Activated CD4-positive, alpha-beta memory T cell treated with anti-CD3 and anti-CD28 coated beads, Interleukin-2, amount 10 ng/mL, durations not matched to agents 7 days and 5 days (primary cell): ENCODE measurements at regions of chr7 and their contacts with region 1.

Region 1: DNA sequence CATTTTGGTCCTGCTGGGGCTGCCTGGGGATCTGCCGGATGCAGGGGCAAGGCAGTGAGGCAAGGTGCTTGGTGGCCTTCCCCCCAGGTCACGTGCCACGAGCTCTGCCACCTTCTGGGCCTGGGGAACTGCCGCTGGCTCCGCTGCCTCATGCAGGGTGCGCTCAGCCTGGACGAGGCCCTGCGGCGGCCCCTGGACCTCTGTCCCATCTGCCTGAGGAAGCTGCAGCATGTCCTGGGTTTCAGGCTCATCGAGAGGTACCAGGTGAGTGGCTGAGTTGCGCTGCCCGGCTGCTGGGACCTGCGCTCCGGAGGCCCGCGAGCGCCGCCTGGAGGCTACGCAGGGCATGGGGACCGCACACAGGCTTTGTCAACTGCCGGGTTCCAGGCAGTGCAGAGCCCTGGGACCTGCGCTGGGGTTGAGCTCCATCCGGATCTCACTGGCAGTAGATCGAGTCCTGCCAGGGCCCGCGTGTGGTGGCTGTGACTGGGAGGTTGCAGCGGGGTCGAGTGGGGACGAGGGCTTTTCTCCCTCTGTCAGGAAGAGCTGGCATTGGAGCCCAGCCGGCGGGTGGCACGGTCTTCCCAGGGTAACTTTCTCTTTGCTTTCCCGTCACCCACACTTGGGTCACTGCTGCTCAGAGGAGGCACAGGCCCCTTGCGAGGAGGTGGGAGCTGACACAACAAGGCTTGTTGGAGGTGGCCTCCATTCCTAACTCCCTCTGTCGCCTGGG is 21.7 kb downstream of the AMZ1 start:
- DNase-seq: peak; percentile 88
- H3K4me3 Mint-ChIP-seq: peak overlapping the region; percentile 69
- H3K27ac Mint-ChIP-seq: peak overlapping the region; percentile 81
- H3K4me1 Mint-ChIP-seq: peaks cover 38% of the 10 kb centered on the region
- H3K27me3 Mint-ChIP-seq: peaks cover 5% of the 10 kb centered on the region

Region 2: DNA sequence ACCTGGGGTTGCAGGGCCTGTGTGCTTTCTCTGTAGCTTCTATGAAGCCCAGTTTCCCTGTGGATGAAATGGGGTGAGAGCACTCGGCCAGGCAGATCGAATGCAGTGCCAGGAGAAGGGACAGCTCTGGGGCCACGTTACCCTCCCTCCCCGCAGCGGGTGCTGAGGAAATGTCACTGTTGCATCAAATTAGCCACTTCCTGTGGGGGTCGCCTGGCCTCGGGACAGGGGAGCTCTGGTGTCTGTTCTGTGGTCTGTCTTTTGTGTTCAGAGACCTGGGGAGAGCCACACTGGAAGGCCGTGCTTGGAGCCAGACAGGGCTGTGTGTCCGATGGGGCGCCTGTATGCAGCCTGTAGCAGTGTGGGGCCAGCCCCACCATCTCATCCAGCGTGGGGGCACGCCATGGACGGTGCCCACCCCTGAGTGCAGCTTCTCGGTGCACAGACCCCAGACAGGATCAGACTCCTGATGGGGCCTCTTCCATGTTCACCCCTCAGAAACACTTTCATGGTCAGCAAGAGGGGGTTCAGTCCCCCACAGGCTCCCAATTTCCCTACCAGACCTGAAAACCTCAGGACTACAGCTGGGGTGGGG is 64.3 kb before region 1 on chr7:
- CTCF ChIA-PET with region 1: interaction called, 17 read pairs
- POLR2A ChIA-PET with region 1: interaction called, 3 read pairs
- DNase-seq: peak; percentile 61
- H3K4me3 Mint-ChIP-seq: peak overlapping the region; percentile 1
- H3K27ac Mint-ChIP-seq: peak overlapping the region; percentile 68
- H3K4me1 Mint-ChIP-seq: peaks cover 15% of the 10 kb centered on the region
- H3K27me3 Mint-ChIP-seq: no peaks in the 10 kb centered on the region

Region 3: GRCh38 chr7:2670720-2671391 is 38.9 kb before region 1 on chr7:
- CTCF ChIA-PET with region 1: interaction called, 117 read pairs
- POLR2A ChIA-PET with region 1: interaction called, 18 read pairs
- DNase-seq: peak; percentile 71
- H3K4me3 Mint-ChIP-seq: no peak overlapping the region
- H3K27ac Mint-ChIP-seq: no peak overlapping the region
- H3K4me1 Mint-ChIP-seq: peaks cover 8% of the 10 kb centered on the region
- H3K27me3 Mint-ChIP-seq: peaks cover 32% of the 10 kb centered on the region

Region 4: DNA sequence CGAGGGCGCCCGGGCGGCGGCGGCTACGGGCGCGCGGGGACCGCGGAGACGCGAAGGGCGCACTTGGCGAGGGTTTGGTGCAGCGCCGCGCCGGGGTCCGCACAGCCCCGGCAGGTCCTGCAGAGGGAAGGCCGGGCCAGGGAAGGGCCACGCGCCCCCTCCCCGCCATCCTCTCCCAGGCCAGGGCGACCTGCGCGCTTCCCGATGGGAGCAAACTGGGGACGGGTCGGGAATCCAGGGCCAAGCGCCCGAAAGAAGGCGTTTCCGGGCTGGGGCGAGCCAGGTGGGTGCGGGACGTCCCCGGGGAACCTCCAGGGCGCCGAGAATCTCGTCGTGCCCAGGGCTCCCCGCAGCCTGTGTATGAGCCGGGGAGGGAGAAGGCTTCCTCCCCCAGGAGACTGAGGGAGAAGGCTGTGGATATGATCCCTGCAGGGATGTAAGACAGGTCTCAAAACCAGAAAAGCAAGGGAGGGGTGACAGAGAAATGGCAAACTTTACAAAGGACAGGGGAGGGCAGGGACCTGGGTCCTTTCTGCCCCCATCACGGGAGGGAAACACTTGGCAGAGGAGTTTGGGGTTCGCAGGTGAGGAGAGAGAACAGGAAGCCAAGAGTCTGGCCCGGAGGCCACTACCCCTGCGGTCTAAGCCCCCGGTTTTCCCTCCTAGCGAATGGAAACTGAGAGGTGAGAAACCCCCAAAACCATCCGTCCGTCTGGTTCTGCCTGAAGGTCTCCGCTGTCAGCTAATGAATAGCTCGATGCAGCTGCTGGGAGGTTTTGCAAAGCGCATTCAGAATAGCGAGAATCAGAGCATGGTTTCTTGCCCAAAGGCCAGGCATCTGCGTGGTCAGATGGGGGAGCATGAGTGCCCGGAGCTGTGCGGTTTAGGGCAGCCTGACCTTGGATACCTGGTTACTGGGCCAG is 21.0 kb before region 1 on chr7:
- CTCF ChIA-PET with region 1: interaction called, 53 read pairs
- POLR2A ChIA-PET with region 1: no interaction called
- DNase-seq: no peak
- H3K4me3 Mint-ChIP-seq: no peak overlapping the region
- H3K27ac Mint-ChIP-seq: no peak overlapping the region
- H3K4me1 Mint-ChIP-seq: peaks cover 16% of the 10 kb centered on the region
- H3K27me3 Mint-ChIP-seq: peaks cover 48% of the 10 kb centered on the region

Region 5: GRCh38 chr7:2720582-2721491 is 11.1 kb after region 1 on chr7:
- CTCF ChIA-PET with region 1: interaction called, 27 read pairs
- POLR2A ChIA-PET with region 1: interaction called, 18 read pairs
- DNase-seq: peak; percentile 85
- H3K4me3 Mint-ChIP-seq: no peak overlapping the region
- H3K27ac Mint-ChIP-seq: peak overlapping the region; percentile 44
- H3K4me1 Mint-ChIP-seq: peaks cover 48% of the 10 kb centered on the region
- H3K27me3 Mint-ChIP-seq: no peaks in the 10 kb centered on the region